Posterior vena cava (tissue), 2 donors: ENCODE measurements at regions of chr1 and their contacts with region 1.

Region 1: GRCh38 chr1:17045634-17046333 is 8.0 kb downstream of the SDHB start:
- DNase-seq: no peak

Region 2: GRCh38 chr1:16958503-16958902 is 87.3 kb before region 1 on chr1:
- intact Hi-C with region 1: loop called (anchors 5 to 10 kb)
- DNase-seq: no peak

Region 3: GRCh38 chr1:17795836-17796645 is 750.3 kb after region 1 on chr1:
- intact Hi-C with region 1: no loop called
- DNase-seq: peak; percentile 63